Activated CD8-positive, alpha-beta memory T cell treated with anti-CD3 and anti-CD28 coated beads, Interleukin-2, amount 10 ng/mL, durations not matched to agents 7 days and 5 days (primary cell): ENCODE measurements at regions of chr17 and their contacts with region 1.

Region 1: DNA sequence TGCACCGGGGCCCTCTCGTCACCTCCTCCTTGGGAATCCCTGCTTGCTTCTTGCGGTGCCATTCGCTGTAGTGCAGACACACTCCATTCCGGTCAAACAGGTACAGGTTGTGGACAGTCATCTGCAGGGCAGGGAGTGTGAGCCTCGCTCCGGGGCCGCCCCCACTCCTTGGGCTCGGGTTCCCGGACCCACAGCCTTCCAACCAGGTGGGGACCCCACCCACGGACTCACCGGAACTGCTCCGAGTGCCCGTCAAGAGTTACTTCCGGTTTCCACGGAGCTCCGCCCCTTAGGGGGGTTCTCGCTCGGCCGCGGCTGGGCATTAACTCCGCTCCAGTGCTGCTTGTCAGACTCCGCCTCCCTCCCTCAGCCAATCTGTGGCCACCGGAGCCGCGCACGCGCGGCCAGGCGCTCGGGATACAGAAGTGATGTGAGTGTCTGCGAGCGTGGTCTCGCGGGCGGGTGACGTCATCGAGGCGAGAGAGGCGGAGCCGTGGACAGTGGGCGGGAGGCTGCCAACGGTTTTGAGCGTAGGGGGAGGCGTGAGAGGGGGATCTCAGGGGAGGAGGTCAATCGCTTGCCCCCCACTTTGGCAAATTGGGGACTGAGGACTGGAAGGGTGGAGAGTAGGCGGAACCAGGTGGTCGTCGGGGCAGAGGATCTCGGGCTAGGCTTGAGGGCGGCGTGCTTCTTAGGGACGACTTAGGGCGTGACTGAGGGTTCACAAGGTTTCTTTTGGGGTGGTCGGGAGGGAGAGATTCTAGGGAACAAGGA is at the starts of genes CNTROB and TRAPPC1:
- DNase-seq: peak; percentile 100
- ATAC-seq: peak; percentile 97
- H3K4me3 Mint-ChIP-seq: peak within 1 kb of the TSS; percentile 97
- H3K27ac Mint-ChIP-seq: peak within 1 kb of the TSS; percentile 97
- H3K4me1 Mint-ChIP-seq: peaks cover 54% of the 10 kb centered on the region
- H3K27me3 Mint-ChIP-seq: no peaks in the 10 kb centered on the region
- total RNA-seq, gene CNTROB: 56.8 to 69.2 TPM
- total RNA-seq, gene TRAPPC1: 216 to 245 TPM

Region 2: GRCh38 chr17:7915611-7916382 is 16.1 kb before region 1 on chr17 and contains the start of gene RNF227:
- CTCF ChIA-PET with region 1: interaction called, 47 read pairs
- DNase-seq: peak; percentile 89
- ATAC-seq: peak; percentile 87
- H3K4me3 Mint-ChIP-seq: peak within 1 kb of the TSS; percentile 87
- H3K27ac Mint-ChIP-seq: peak within 1 kb of the TSS; percentile 94
- H3K4me1 Mint-ChIP-seq: peaks cover 28% of the 10 kb centered on the region
- H3K27me3 Mint-ChIP-seq: no peaks in the 10 kb centered on the region
- total RNA-seq, gene RNF227: 2.8 to 3.9 TPM

Region 3: GRCh38 chr17:7944326-7944725 is 12.4 kb after region 1 on chr17:
- CTCF ChIA-PET with region 1: interaction called, 13 read pairs
- DNase-seq: no peak
- ATAC-seq: no peak
- H3K4me3 Mint-ChIP-seq: no peak overlapping the region
- H3K27ac Mint-ChIP-seq: no peak overlapping the region
- H3K4me1 Mint-ChIP-seq: peaks cover 1% of the 10 kb centered on the region
- H3K27me3 Mint-ChIP-seq: no peaks in the 10 kb centered on the region

Region 4: DNA sequence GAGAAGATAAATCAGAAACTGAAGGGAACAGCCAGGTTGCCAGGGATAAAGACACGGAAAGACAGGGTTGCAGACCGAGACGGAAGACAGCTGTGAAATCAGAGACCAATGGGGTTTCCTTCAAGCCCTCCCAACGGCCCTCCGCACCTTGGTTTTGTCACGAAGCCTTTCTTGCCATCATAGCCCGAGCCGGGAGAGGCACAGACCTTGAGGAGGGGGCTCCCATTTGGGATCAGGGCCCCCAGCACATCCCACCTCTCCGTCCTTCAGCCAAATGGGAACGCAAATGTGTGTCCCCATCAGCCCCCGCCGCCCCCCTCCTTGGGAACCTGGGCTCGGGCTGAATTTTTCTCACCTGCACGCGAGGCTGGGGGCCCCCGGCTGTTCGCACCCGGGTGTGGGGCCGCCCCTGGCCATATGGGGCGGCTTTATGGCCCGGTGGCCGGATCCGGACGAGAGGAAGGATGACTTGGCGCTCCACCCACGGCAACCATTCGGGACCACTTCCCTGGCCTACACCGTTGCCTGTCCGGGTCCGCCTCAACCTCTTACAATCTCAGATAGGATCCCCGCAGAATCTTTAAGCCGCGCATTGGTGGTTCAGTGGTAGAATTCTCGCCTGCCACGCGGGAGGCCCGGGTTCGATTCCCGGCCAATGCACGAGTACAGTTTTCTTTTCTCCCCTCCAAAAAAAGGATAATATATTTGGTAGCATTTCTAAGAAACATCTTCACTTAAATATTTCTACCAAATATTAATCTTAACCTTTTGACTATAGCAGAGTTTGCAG is 193.5 kb after region 1 on chr17:
- CTCF ChIA-PET with region 1: no interaction called
- DNase-seq: peak; percentile 92
- ATAC-seq: peak; percentile 24
- H3K4me3 Mint-ChIP-seq: peak overlapping the region; percentile 95
- H3K27ac Mint-ChIP-seq: peak overlapping the region; percentile 80
- H3K4me1 Mint-ChIP-seq: peaks cover 56% of the 10 kb centered on the region
- H3K27me3 Mint-ChIP-seq: peaks cover 46% of the 10 kb centered on the region